GM23248 (cell line): ENCODE measurements at regions of chr9 and their contacts with region 1.

Region 1: GRCh38 chr9:14203356-14204056 is 110.4 kb downstream of the NFIB start:
- DNase-seq: peak; percentile 37
- H3K4me3 ChIP-seq: no peak overlapping the region
- H3K27ac ChIP-seq: no peak overlapping the region
- H3K4me1 ChIP-seq: peaks cover 20% of the 10 kb centered on the region
- H3K27me3 ChIP-seq: no peaks in the 10 kb centered on the region

Region 2: DNA sequence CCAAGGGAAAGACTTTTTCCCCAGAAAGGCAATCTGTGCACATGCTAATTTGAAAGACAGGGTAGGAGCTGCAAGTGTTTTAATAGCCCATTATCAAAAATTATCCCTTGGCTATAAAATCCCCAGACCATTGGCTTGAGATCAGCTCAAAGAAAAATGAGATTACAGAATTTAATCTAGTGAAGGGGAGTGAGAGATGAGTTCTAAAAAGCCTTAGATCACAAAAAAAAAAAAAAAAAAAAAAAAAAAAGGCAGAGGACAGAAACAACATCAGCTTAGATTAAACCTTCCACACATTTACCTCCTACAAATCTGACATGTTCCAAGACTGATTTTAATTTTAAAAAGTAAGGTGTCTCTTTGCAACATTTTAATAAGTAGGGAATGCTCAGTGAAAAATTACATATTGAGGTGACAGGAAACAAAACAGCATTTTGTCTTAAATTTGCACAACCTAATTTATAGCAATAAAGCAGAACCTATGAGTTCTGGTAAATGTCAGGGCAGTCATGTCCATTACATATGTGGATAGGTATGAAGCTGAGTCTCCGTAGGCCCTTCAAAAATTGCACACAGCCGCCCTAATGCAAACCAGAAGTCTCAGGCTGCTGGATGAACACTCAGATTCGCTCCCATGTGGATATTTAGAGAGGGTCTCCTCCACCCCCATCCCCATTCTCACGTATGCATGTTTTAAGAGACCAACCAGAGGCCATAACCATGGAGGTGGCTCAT is 67.0 kb after region 1 on chr9:
- in situ Hi-C with region 1: no loop called
- DNase-seq: peak; percentile 30
- H3K4me3 ChIP-seq: no peak overlapping the region
- H3K27ac ChIP-seq: no peak overlapping the region
- H3K4me1 ChIP-seq: peaks cover 9% of the 10 kb centered on the region
- H3K27me3 ChIP-seq: no peaks in the 10 kb centered on the region

Region 3: DNA sequence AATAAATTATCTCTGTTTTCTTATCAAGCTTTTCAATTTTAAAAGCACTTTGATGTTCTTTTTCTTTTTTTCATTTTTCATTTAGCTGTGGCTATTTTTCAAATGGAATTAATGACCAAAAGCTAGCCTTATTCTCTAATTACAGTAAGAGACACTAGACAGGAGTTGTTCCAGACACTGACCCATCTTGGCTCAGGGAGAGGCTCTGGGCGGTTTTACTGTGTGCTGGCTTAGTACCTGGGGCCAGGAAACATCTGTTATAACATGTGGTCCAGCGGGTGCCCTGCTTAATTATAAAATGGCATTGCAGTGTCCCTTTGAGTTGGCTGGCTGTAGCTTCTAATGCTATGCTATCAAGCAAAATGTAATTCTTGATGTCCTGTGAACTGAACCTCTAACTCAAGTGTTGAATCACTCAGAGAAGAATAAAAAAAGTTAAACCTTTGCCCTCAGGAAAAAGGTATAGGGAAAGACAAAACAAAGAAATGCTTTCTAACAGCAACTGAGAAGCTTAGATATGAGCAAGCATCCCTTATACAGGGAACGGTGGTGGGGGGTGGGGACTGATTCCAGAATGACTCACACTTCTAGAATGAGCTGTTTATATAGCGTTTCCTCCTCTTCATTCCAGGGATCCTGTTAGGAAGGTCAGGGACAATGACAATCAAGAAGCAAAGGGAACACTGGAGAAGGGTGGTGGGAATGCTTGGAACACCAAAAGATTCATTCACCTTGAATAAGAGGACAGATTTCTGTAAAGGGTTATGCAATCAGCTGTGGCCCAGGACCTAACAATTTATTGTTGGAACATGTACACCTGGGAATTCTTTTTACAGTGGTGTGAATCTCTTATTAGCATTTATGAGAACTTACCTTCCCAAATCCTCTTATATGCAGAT is 169.2 kb after region 1 on chr9:
- in situ Hi-C with region 1: loop called (anchors 10 kb)
- DNase-seq: peak; percentile 70
- H3K4me3 ChIP-seq: no peak overlapping the region
- H3K27ac ChIP-seq: no peak overlapping the region
- H3K4me1 ChIP-seq: peaks cover 17% of the 10 kb centered on the region
- H3K27me3 ChIP-seq: peaks cover 22% of the 10 kb centered on the region